ENCODE measurements at regions of chr4 and their contacts with region 1.

Region 1: DNA sequence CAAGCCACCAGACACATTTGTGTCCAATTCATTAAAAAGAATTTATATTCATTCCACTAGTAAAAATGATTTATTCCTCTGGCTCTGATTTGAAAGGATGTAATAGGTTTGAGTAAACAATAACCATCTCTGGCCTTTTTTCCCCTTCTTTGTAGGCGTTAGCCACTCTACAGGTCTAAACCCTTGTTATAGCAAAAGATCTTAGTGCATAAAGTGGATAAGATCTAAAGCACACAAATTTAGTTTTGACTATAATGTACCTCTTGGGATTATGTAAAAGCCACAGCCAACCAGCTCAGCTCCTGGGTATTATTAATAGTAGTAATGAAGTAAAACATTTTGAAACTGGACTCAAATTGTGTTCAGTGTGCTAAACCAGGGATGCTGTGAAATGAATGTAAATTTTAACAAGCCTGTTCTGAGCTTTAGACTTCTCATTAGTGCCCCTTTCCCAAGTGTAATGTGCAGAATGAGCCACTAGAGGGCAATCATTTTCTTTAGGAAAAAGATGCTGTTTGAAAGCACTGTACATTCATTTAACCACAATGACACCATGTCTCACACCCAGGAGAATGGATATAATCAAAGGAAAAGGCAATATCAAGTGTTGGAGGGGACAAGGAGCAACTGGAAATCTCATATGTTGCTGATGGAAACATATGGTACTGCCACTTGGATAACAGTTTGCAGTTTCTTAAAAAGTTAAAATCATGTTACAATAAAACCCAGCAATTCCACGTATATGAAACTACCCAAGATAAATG is 69.7 kb downstream of the KLHL8 start:
- DNase-seq: peak; percentile 77
- H3K4me3 ChIP-seq: no peak overlapping the region
- H3K27ac ChIP-seq: no peak overlapping the region
- H3K4me1 ChIP-seq: no peaks in the 10 kb centered on the region
- CTCF ChIP-seq: peak; percentile 98

Region 2: GRCh38 chr4:86895692-86896488 is 254.8 kb before region 1 on chr4:
- CTCF ChIA-PET with region 1: no interaction called
- POLR2A ChIA-PET with region 1: no interaction called
- intact Hi-C with region 1: loop called (anchors 1 kb)
- DNase-seq: peak; percentile 73
- H3K4me3 ChIP-seq: no peak overlapping the region
- H3K27ac ChIP-seq: no peak overlapping the region
- H3K4me1 ChIP-seq: no peaks in the 10 kb centered on the region
- CTCF ChIP-seq: peak; percentile 96

Region 3: GRCh38 chr4:86921608-86922252 is 228.9 kb before region 1 on chr4:
- CTCF ChIA-PET with region 1: no interaction called
- POLR2A ChIA-PET with region 1: no interaction called
- intact Hi-C with region 1: loop called (anchors 1 kb)
- DNase-seq: no peak
- H3K4me3 ChIP-seq: no peak overlapping the region
- H3K27ac ChIP-seq: no peak overlapping the region
- H3K4me1 ChIP-seq: peaks cover 12% of the 10 kb centered on the region
- CTCF ChIP-seq: no peak

Region 4: GRCh38 chr4:87220094-87220822 is 69.6 kb after region 1 on chr4 and contains the start of gene KLHL8:
- CTCF ChIA-PET with region 1: interaction called, 4 read pairs
- POLR2A ChIA-PET with region 1: interaction called, 9 read pairs
- intact Hi-C with region 1: loop called (anchors 5 kb)
- DNase-seq: peak; percentile 90
- H3K4me3 ChIP-seq: peak within 1 kb of the TSS; percentile 95
- H3K27ac ChIP-seq: peak within 1 kb of the TSS; percentile 77
- H3K4me1 ChIP-seq: peaks cover 26% of the 10 kb centered on the region
- CTCF ChIP-seq: peak; percentile 35
- total RNA-seq, gene KLHL8: 9.0 and 12.6 TPM in 2 replicates

Region 5: DNA sequence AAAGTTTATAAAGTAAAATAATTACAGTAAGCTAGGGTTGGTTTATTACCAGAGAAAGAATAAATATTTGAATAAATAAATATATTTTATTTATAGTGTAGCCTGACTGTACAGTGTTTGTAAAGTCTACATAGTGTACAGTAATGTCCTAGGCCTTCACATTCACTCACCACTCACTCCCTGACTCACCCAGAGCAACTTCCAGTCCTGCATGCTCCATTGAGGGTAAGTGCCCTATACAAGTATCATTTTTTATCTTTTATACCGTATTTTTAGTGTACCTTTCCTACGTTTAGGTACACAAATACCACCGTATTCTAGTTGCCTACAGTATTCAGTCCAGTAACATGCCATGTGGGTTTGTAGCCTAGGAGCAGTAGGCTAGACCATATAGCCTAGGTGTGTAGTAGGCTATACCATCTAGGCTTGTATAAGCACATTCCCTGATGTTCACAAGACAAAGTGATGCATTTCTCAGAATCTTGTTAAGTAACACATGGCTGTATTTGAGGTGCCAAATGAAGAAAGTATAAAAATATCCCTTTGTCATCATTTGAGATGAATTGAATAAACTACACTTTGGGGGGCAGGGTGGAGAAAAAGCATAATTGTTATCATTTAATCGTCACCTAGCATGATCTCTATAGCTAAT is 84.5 kb after region 1 on chr4:
- CTCF ChIA-PET with region 1: interaction called, 3 read pairs
- POLR2A ChIA-PET with region 1: interaction called, 7 read pairs
- intact Hi-C with region 1: loop called (anchors 1 kb)
- DNase-seq: no peak
- H3K4me3 ChIP-seq: peak overlapping the region; percentile 47
- H3K27ac ChIP-seq: no peak overlapping the region
- H3K4me1 ChIP-seq: no peaks in the 10 kb centered on the region
- CTCF ChIP-seq: no peak

Region 6: DNA sequence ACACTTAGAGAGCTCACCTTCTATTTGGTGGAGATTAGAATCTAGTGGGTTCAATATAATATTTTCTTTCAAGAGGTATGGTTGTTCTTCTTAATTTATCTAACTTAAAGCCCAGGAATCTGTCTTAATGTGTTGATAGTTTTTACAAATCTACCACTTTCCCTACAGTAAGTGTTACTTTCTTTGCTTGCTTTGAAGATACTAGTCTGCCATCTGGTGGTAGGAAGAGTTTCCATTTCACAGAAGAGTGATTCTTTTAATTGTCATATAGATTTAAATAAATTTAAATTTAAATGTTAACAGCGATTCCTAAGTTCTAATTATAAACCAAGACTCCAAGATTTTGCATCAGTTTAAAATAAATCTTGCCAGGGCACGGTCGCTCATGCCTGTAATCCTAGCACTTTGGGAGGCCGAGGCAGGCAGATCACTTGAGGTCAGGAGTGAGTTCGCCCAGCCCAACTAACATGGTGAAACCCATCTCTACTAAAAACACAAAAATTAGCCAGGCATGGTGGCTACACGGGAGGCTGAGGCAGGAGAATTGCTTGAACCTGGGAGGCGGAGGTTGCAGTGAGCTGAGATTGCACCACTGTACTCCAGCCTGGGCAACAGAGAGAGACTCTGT is 315.2 kb after region 1 on chr4:
- CTCF ChIA-PET with region 1: no interaction called
- POLR2A ChIA-PET with region 1: no interaction called
- intact Hi-C with region 1: loop called (anchors 10 kb)
- DNase-seq: peak; percentile 62
- H3K4me3 ChIP-seq: no peak overlapping the region
- H3K27ac ChIP-seq: no peak overlapping the region
- H3K4me1 ChIP-seq: peaks cover 9% of the 10 kb centered on the region
- CTCF ChIP-seq: peak; percentile 89